ENCODE measurements at regions of chr15 and their contacts with region 1.

Region 1: GRCh38 chr15:51907136-51907914 is 64.3 kb downstream of the LEO1 start:
- DNase-seq: no peak
- H3K4me3 ChIP-seq: no peak overlapping the region
- H3K27ac ChIP-seq: no peak overlapping the region
- H3K4me1 ChIP-seq: no peaks in the 10 kb centered on the region
- H3K27me3 ChIP-seq: no peaks in the 10 kb centered on the region
- CTCF ChIP-seq: no peak

Region 2: DNA sequence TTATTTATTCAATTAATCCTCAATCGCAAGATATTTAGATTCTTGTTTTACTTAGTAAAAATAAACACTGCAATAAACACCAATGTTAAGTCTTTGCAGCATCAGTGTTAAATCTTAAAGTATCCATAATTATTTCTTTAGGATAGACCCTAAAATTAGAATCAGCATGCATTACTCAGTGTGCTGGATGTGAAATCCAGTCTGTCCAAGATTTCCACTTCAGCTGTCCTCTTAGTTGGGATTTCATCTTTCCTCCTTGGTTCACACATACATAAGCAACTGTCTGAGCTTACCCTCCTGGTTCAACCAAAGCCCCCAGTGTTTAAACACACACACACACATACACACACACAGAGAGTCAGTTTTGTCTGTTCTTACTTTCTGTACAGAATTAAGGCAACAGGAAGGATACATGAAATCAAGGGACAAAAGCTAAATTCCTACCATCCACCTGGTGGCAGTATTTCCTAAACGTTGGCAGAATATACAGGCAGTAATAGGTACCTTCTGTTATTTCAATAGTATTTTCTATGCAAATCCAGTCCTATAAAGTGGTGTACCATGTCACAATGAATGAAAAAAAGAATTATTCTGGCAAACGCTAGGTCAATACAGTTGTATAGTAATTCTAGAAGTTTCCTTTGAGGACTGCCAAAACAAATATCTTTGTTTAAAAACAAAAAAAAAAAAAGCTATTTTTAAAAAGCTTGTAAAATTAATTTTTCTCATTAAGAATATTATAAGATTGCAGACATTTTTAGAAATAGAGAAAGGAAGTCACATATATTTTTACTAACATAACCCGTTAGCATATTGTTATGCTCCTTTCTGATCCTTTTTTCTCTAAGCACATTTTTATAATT is 257.4 kb before region 1 on chr15:
- CTCF ChIA-PET with region 1: no interaction called
- POLR2A ChIA-PET with region 1: no interaction called
- intact Hi-C with region 1: loop called (anchors 10 kb)
- DNase-seq: peak; percentile 77
- H3K4me3 ChIP-seq: no peak overlapping the region
- H3K27ac ChIP-seq: no peak overlapping the region
- H3K4me1 ChIP-seq: no peaks in the 10 kb centered on the region
- H3K27me3 ChIP-seq: no peaks in the 10 kb centered on the region
- CTCF ChIP-seq: peak; percentile 77

Region 3: GRCh38 chr15:51971375-51972133 is 64.2 kb after region 1 on chr15 and contains the start of gene LEO1:
- CTCF ChIA-PET with region 1: no interaction called
- POLR2A ChIA-PET with region 1: no interaction called
- intact Hi-C with region 1: no loop called
- DNase-seq: peak; percentile 98
- H3K4me3 ChIP-seq: peak within 1 kb of the TSS; percentile 89
- H3K27ac ChIP-seq: peak within 1 kb of the TSS; percentile 92
- H3K4me1 ChIP-seq: peaks cover 6% of the 10 kb centered on the region
- H3K27me3 ChIP-seq: no peaks in the 10 kb centered on the region
- CTCF ChIP-seq: peak; percentile 61
- total RNA-seq, gene LEO1: 37.5 and 40.0 TPM in 2 replicates

Measured in A673 (cell line).